ENCODE measurements at regions of chr20 and their contacts with region 1.

Region 1: DNA sequence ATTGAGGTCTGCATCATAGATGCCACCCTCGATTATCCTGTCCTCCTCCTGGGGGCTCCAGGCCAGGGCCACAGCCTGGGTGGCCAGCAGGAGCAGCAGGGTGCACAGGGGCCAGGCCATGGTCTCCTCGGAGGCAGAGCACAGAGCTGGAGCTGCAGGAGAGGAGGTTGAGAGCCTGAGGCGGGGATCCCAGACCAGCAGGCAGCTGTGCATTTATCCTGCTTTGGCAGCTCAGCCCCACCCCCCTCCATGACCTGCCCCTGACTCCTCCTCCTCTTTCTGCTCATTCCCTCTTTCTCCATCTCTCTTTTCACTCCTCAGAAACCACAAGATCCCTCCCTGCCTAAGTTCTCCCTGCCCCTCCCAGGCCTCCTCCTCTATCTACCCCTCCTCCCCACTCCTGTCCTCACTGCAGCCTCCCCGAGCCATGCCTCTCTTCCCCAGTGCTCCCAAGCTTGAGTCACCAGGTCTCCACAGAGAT is at the start of gene CST2:
- DNase-seq: no peak
- H3K4me3 ChIP-seq: no peak within 1 kb of the TSS
- H3K27ac ChIP-seq: no peak within 1 kb of the TSS
- H3K4me1 ChIP-seq: no peaks in the 10 kb centered on the region
- H3K27me3 ChIP-seq: no peaks in the 10 kb centered on the region
- CTCF ChIP-seq: no peak
- EP300 ChIP-seq: no peak
- POLR2A ChIP-seq: no peak
- total RNA-seq, gene CST2: not detected

Region 2: GRCh38 chr20:23744817-23745216 is 81.8 kb before region 1 on chr20:
- in situ Hi-C with region 1: loop called in 2 of 4 experiments (anchors 25 kb)
- intact Hi-C with region 1: no loop called
- DNase-seq: no peak
- H3K4me3 ChIP-seq: no peak overlapping the region
- H3K27ac ChIP-seq: no peak overlapping the region
- H3K4me1 ChIP-seq: no peaks in the 10 kb centered on the region
- H3K27me3 ChIP-seq: no peaks in the 10 kb centered on the region
- CTCF ChIP-seq: no peak
- EP300 ChIP-seq: no peak
- POLR2A ChIP-seq: no peak